Activated T-helper 1 cell treated with anti-CD3 and anti-CD28 coated beads, Interleukin-12 subunit alpha, Interleukin-12 subunit beta, Interleukin-2, Interleukin-4 antibody, amounts not matched to agents 30 ng/mL and 10 ng/mL and 1 ng/mL, durations not matched to agents 14 hours and 24 hours and 36 hours (primary cell): ENCODE measurements at regions of chr2 and their contacts with region 1.

Region 1: DNA sequence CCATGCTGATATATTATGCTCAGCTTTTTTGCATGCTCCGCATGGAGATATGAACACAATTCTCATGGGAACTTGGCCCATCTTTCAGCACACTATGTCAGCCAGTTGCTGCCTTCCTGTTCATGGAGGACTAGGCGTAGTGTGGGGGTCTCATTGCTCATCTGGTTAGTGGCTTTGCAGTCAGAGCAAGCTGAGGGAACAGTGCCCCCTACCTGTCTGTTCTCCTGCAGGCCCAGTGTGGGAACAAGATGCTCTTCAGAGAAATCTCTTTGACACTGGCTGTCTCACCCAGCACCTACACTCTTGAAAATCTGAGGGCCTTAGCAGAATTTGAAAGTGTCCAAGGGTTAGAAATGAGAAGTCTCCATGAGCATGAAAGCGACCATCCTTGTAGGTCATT is 47.1 kb downstream of the SPTBN1 start:
- DNase-seq: no peak
- H3K4me3 Mint-ChIP-seq: no peak overlapping the region
- H3K27ac Mint-ChIP-seq: no peak overlapping the region
- H3K4me1 Mint-ChIP-seq: no peaks in the 10 kb centered on the region
- H3K27me3 Mint-ChIP-seq: peaks cover 6% of the 10 kb centered on the region

Region 2: DNA sequence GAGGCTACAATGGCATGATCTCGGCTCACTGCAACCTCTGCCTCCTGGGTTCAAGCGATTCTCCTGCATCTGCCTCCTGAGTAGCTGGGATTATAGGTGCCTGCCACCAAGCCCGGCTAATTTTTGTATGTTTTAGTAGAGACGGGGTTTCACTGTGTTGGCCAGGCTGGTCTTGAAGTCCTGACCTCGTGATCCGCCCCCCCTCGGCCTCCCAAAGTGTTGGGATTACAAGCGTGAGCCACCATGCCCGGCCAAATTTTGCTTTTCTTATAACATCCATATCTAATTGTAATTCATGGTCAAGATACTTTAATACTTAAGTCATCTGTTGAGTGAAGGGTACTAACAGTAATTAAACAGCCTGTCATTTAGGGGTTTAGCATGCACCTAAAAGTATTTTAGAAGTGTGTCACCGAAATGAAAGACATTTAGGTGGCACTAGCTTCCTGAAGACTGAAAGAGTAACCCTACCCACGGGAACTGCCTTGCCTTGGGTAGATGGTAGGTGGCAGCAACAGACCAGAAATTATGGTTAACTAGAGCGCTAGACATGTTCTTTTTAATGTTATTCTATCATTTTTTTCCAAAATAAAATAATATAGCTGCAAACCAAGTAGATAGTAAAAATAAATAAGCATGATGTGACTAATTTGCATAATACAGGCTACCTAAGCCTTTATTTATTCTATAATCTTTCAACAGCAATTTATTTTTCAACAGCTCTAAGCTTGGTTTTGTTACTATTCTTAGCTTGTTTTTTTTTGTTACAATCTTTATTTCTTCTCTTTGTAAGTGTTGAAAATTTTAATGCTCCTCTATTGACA is 396.3 kb before region 1 on chr2:
- intact Hi-C with region 1: loop called (anchors 1 kb)
- DNase-seq: peak; percentile 11
- H3K4me3 Mint-ChIP-seq: no peak overlapping the region
- H3K27ac Mint-ChIP-seq: no peak overlapping the region
- H3K4me1 Mint-ChIP-seq: peaks cover 6% of the 10 kb centered on the region
- H3K27me3 Mint-ChIP-seq: peaks cover 8% of the 10 kb centered on the region

Region 3: GRCh38 chr2:54206596-54206995 is 296.6 kb before region 1 on chr2:
- intact Hi-C with region 1: loop called (anchors 10 kb)
- DNase-seq: no peak
- H3K4me3 Mint-ChIP-seq: no peak overlapping the region
- H3K27ac Mint-ChIP-seq: no peak overlapping the region
- H3K4me1 Mint-ChIP-seq: no peaks in the 10 kb centered on the region
- H3K27me3 Mint-ChIP-seq: no peaks in the 10 kb centered on the region

Region 4: GRCh38 chr2:54456612-54457322 is 46.4 kb before region 1 on chr2:
- intact Hi-C with region 1: no loop called
- DNase-seq: no peak
- H3K4me3 Mint-ChIP-seq: peak overlapping the region; percentile 84
- H3K27ac Mint-ChIP-seq: peak overlapping the region; percentile 55
- H3K4me1 Mint-ChIP-seq: peaks cover 19% of the 10 kb centered on the region
- H3K27me3 Mint-ChIP-seq: peaks cover 64% of the 10 kb centered on the region